Ovary (tissue), 10 donors: ENCODE measurements at regions of chr3 and their contacts with region 1.

Region 1: DNA sequence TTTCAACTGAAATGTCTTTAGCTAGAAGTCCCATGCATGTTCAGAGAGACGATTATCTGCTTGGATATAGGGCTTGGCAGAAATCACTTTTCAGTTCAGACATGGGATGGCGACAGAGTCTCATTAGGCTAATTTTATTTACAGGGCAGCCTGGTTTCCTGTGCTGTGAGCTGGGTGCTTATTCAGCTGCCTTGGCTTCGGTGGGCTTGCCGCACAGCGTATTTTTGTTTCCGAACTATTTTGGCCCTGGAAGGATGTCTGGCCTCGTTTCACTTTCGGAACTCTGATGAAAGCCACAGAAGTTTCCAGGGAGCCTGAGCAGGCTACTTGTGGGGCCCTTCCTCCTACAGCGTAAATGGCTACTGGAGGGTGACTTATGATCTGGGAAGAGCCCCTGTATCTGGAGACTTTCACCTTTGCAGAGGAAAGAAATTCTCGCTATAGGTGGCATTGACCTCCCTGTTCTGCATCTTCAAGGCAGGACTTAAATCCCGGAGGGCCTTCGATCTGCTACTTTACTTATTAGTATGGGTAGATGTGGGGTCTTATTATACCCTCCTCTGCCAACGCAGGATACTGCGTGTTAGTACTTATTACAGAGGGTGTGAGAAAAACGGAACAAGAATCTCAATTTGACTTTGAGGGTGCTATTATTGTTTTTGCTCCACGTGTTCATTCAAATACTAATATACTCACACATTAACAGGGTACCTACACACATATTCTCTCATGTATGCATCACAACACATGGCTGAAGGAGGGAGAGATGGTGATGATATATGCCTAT is 364.0 kb upstream of the RBMS3 start:
- DNase-seq: peak; percentile 61 to 70 (median 65)
- H3K4me3 ChIP-seq: peak overlapping the region; percentile 9
- H3K27ac ChIP-seq: peak overlapping the region in 1 of 2 donors; percentile 22
- H3K4me1 ChIP-seq: peaks cover 2% of the 10 kb centered on the region
- H3K27me3 ChIP-seq: no peaks in the 10 kb centered on the region
- CTCF ChIP-seq: peak; percentile 18 to 47 (median 40)
- EP300 ChIP-seq: no peak
- POLR2A ChIP-seq: no peak

Region 2: DNA sequence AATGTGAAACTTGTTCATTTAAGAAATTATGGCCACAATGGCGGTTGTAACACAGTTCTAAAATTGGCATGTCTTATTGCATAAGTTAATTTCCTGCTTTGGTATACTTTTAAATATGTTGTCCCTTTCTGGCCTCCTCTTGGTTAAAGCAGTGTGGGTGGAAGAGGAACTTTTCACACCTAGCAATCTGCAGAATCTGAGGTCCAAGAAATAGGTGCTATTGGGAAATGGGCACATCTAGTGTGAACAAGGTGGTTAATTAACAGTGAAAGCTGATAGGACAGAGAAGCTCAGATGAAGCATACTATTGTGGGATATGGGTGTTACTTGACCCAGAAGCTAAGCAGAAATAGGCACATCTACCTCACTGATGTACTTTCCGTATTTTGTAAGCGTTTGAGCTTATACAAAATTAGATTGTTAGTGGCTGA is 664.9 kb before region 1 on chr3:
- intact Hi-C with region 1: no loop called
- DNase-seq: no peak
- H3K4me3 ChIP-seq: no peak overlapping the region
- H3K27ac ChIP-seq: no peak overlapping the region
- H3K4me1 ChIP-seq: no peaks in the 10 kb centered on the region
- H3K27me3 ChIP-seq: no peaks in the 10 kb centered on the region
- CTCF ChIP-seq: no peak
- EP300 ChIP-seq: no peak
- POLR2A ChIP-seq: no peak

Region 3: DNA sequence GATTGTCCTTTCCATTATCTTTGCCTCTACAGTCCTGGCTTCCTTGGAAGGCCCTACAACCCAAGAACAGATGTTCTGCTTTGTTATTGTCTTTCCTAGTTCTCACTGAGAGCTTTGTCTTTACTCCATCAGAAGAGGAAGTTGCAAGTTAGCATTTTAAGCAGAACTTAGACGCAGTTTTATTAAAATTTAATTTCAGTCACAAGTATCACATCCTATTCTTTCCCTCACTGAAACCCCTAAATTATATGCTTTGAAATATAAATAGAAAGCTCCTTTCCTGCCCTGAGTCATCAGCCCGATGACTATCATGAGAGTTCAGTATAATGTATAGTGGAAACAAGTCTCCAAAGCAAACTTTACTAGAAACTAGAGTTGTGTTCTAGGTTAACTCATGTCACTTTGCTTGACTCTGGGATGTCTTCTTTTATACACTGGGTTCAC is 72.8 kb after region 1 on chr3:
- intact Hi-C with region 1: no loop called
- DNase-seq: no peak
- H3K4me3 ChIP-seq: no peak overlapping the region
- H3K27ac ChIP-seq: no peak overlapping the region
- H3K4me1 ChIP-seq: no peaks in the 10 kb centered on the region
- H3K27me3 ChIP-seq: no peaks in the 10 kb centered on the region
- CTCF ChIP-seq: no peak
- EP300 ChIP-seq: no peak
- POLR2A ChIP-seq: no peak

Region 4: GRCh38 chr3:29764603-29765254 is 847.8 kb after region 1 on chr3:
- intact Hi-C with region 1: loop called in 2 of 4 experiments (anchors 5 to 10 kb)
- DNase-seq: peak in 3 of 5 donors; percentile 15 to 34 (median 28)
- H3K4me3 ChIP-seq: no peak overlapping the region
- H3K27ac ChIP-seq: no peak overlapping the region
- H3K4me1 ChIP-seq: no peaks in the 10 kb centered on the region
- H3K27me3 ChIP-seq: no peaks in the 10 kb centered on the region
- CTCF ChIP-seq: peak; percentile 18 to 85 (median 70)
- EP300 ChIP-seq: no peak
- POLR2A ChIP-seq: no peak